Activated naive CD4-positive, alpha-beta T cell treated with anti-CD3 and anti-CD28 coated beads for 36 hours (primary cell): ENCODE measurements at regions of chr6 and their contacts with region 1.

Region 1: GRCh38 chr6:16684896-16685554 is 76.2 kb downstream of the ATXN1 start:
- DNase-seq: peak; percentile 97
- H3K4me3 Mint-ChIP-seq: peak overlapping the region; percentile 20
- H3K27ac Mint-ChIP-seq: peak overlapping the region; percentile 44
- H3K4me1 Mint-ChIP-seq: peaks cover 74% of the 10 kb centered on the region
- H3K27me3 Mint-ChIP-seq: no peaks in the 10 kb centered on the region

Region 2: DNA sequence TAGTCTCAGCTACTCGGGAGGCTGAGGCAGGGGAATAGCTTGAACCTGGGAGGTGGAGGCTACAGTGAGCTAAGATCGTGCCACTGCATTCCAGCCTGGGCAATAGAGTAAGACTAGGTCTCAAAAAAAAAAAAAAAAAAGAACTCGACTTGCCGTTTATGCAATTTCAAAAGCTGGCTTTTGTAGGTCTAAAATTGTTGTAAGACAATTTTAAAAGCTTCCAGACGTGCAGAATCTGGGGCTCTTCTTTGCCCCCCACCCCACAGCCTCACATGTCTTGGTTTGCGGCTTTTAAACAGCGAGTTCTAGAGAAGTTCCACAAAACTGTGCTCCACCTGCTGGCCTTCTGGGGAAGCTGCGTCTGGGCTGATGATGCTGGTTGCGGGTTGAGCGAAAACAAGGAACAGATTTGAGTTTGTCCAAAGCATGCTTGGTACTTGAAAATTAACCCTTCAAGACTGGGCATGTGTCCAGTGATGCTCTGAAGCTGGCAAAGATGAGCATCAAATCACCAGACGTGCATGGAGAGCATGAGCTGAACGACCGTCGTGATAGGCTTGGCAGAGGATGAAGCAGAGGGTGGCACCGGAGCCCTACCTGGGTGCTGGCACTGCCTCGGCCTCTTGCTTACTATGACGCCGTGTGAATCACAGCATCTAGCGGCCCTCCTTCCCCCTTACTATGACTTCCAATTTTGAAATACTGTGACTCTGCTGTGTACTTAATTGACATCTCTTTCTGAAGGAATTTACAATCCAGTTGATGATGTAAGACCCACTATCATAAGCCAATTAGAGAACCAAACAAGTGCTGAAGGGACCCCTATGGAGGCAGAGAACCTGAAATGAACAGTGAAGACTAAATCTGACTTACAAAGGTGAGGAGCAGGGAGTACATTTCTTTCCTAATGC is 275.2 kb before region 1 on chr6:
- CTCF ChIA-PET with region 1: no interaction called
- intact Hi-C with region 1: loop called (anchors 10 kb)
- DNase-seq: peak; percentile 75
- H3K4me3 Mint-ChIP-seq: peak overlapping the region; percentile 30
- H3K27ac Mint-ChIP-seq: peak overlapping the region; percentile 53
- H3K4me1 Mint-ChIP-seq: peaks cover 31% of the 10 kb centered on the region
- H3K27me3 Mint-ChIP-seq: no peaks in the 10 kb centered on the region

Region 3: GRCh38 chr6:16481697-16482399 is 203.2 kb before region 1 on chr6:
- CTCF ChIA-PET with region 1: no interaction called
- intact Hi-C with region 1: loop called (anchors 1 kb)
- DNase-seq: peak; percentile 79
- H3K4me3 Mint-ChIP-seq: peak overlapping the region; percentile 32
- H3K27ac Mint-ChIP-seq: peak overlapping the region; percentile 75
- H3K4me1 Mint-ChIP-seq: peaks cover 70% of the 10 kb centered on the region
- H3K27me3 Mint-ChIP-seq: no peaks in the 10 kb centered on the region

Region 4: DNA sequence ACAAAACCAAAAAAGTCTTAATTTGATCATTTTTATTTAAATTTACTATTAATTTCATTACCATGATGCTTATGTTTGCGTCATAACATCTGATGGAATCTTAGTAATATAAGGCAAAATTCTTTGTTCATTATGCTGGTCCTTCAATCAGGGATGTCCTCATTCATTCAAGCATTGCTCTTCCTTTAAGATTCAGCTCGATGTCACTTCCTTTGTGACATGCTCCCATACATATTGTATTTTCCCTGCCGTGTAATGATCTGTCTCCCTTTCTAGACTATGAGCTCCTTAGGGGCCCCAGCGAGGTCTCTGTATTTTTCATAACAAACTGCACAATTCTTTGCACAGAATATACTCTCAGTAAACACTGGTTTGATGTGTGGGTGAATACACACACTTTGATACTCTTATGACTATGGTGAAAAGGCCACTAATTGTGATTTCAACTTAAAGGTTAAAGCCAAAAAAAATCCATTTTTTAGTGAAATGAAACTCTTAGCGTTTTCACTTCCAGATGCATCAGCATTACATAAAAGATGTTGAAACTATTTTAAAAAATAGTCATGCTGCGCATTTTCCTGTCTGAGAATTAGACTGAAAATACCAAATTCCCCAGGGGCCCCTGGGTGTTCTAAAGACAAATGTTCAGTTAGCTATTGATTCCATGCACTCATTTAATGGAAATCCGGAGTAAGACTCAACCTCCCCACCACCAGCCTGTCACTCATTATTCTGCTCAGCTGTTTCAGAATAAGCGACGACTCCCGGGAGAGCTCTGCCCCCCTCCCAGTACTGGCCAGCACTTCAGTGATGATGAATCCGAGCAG is 93.4 kb before region 1 on chr6:
- CTCF ChIA-PET with region 1: no interaction called
- intact Hi-C with region 1: loop called (anchors 1 kb)
- DNase-seq: peak; percentile 46
- H3K4me3 Mint-ChIP-seq: no peak overlapping the region
- H3K27ac Mint-ChIP-seq: peak overlapping the region; percentile 48
- H3K4me1 Mint-ChIP-seq: peaks cover 18% of the 10 kb centered on the region
- H3K27me3 Mint-ChIP-seq: no peaks in the 10 kb centered on the region

Region 5: GRCh38 chr6:16670183-16670582 is 14.8 kb before region 1 on chr6:
- CTCF ChIA-PET with region 1: no interaction called
- intact Hi-C with region 1: loop called (anchors 1 kb)
- DNase-seq: no peak
- H3K4me3 Mint-ChIP-seq: no peak overlapping the region
- H3K27ac Mint-ChIP-seq: peak overlapping the region; percentile 25
- H3K4me1 Mint-ChIP-seq: peaks cover 38% of the 10 kb centered on the region
- H3K27me3 Mint-ChIP-seq: no peaks in the 10 kb centered on the region

Region 6: DNA sequence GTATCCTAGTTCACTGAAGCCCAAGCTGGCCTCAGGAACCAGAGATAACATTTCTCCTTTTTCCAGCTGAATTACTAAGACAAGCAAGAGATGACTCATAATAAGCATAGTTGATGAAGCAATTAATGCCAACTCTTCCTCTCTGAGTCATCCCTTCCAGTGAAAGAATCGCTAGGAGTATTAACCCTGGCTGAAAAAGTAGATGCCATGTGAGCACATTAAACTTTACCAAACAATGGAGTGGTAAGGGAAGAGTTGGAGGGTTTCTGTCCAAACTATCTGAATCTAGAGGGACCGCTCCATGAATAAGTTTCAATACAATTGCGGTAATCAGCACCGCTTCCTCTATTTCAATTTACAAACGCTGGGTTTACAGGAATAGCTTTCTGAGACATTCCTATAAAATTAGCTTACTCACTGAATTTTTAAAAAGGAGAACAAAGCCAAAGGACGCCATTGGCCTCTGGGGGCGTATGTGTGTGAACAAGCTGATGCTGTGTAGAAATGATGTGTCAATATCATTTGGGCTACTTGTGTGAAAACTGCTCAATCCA is 28.0 kb after region 1 on chr6:
- CTCF ChIA-PET with region 1: interaction called, 3 read pairs
- intact Hi-C with region 1: loop called (anchors 1 kb)
- DNase-seq: peak; percentile 23
- H3K4me3 Mint-ChIP-seq: peak overlapping the region; percentile 51
- H3K27ac Mint-ChIP-seq: peak overlapping the region; percentile 75
- H3K4me1 Mint-ChIP-seq: peaks cover 29% of the 10 kb centered on the region
- H3K27me3 Mint-ChIP-seq: no peaks in the 10 kb centered on the region

Region 7: GRCh38 chr6:16849280-16849987 is 164.4 kb after region 1 on chr6:
- CTCF ChIA-PET with region 1: no interaction called
- intact Hi-C with region 1: no loop called
- DNase-seq: no peak
- H3K4me3 Mint-ChIP-seq: no peak overlapping the region
- H3K27ac Mint-ChIP-seq: no peak overlapping the region
- H3K4me1 Mint-ChIP-seq: peaks cover 15% of the 10 kb centered on the region
- H3K27me3 Mint-ChIP-seq: peaks cover 27% of the 10 kb centered on the region